GM10248 (cell line): ENCODE measurements at regions of chr7 and their contacts with region 1.

Region 1: GRCh38 chr7:158836692-158837091 is 7.4 kb upstream of the ESYT2 start:
- DNase-seq: no peak
- CTCF ChIP-seq: no peak

Region 2: GRCh38 chr7:158740013-158740656 is 96.6 kb before region 1 on chr7:
- CTCF ChIA-PET with region 1: no interaction called
- POLR2A ChIA-PET with region 1: no interaction called
- DNase-seq: no peak
- CTCF ChIP-seq: no peak

Region 3: DNA sequence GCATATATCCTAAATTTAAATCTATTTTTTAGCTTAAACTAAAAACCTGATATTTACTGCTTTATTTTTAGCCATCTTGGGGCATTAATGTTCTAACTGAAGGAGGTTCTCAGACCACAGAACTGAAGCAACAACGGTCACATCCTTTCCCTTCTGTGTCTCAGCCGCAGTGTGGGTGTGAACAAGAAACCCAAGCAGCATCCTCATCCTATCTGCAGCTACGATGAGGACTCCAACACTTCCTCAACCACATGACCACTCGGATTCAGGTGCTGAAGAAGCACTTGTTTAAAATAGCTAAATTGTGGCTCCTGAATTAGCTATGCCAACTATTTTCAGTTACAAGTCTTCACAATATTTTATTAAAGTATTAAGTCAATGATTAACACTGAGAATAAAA is 12.7 kb before region 1 on chr7:
- CTCF ChIA-PET with region 1: no interaction called
- POLR2A ChIA-PET with region 1: no interaction called
- DNase-seq: peak; percentile 59
- CTCF ChIP-seq: no peak

Region 4: DNA sequence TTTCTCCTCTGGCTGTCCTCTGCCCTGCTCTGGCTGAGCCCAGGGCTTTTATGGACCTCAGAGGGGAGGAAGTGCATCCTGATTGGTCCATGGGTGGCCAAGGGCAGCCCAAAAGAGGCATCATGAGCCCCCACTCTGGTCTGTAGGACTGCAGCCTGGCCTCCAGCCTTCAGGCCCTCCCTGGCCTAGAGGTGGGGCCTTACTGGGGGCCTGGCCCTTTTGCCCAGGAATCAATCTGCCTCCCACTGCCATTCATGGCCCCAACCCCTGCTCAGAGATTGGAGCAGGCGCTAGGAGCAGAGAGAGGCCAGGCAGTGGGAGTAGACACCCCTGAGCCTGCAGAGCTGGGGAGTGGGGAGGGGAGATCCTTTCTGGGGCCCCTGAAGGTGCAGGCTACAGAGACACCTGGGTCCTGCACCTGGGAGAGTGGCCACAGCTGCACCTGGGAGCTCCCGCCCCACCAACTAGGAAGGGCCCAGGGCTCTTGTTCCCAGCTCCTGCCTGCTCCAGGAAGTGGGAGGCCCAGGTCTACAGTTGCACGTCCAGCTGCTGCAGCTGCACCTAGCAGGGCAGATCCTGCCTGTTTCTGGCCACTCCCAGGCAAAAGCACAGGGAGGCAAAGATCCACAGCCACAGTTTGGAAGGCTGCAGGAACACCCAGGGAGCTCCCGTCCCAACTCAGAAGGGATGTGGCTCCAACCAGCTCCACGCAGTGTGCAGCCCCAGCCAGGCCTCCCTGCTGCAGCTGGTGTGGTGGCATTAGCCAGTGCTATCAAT is 13.3 kb after region 1 on chr7:
- CTCF ChIA-PET with region 1: interaction called, 12 read pairs
- POLR2A ChIA-PET with region 1: no interaction called
- DNase-seq: no peak
- CTCF ChIP-seq: no peak